ENCODE measurements at regions of chr1 and their contacts with region 1.

Region 1: DNA sequence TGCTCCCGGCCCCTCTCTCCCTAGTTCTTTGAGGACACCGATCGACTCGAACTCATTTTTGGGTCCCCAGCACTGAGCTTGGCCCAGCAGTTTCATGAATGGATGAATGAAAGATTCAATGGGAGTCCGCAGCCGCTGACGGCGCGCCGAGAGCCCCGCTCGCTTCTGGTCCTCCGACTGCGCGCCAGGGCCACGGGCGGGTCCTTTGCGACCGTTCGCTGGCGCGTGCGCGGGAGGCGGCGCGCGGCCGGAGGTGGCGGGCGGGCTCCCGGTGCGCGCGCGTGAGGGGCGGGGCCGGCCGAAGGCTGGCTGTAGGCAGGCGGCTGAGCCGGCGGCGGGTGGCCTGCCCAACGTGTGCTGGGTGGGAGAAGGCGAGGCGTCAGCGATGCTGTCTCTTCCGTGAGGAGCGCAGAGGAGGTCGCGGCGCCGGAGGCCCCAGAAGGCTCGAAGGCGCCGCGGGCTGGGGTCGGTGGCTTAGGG is at the start of gene MAST2:
- DNase-seq: peak; percentile 85 to 89
- ATAC-seq: peak; percentile 95 to 98 (median 96)
- H3K4me3 ChIP-seq: peak within 1 kb of the TSS; percentile 28
- H3K4me3 Mint-ChIP-seq: peak within 1 kb of the TSS; percentile 92
- H3K27ac ChIP-seq: peak within 1 kb of the TSS; percentile 1
- H3K27ac Mint-ChIP-seq: peak within 1 kb of the TSS; percentile 79 to 88
- H3K4me1 ChIP-seq: peaks cover 17% of the 10 kb centered on the region
- H3K4me1 Mint-ChIP-seq: peaks cover 16 to 31% of the 10 kb centered on the region in 2 donors
- H3K27me3 ChIP-seq: no peaks in the 10 kb centered on the region
- H3K27me3 Mint-ChIP-seq: no peaks in the 10 kb centered on the region
- CTCF ChIP-seq: no peak
- total RNA-seq, gene MAST2: 25.3 to 28.6 (median 27.9) TPM

Region 2: GRCh38 chr1:45750298-45751038 is 52.9 kb before region 1 on chr1 and contains the start of gene IPP:
- intact Hi-C with region 1: loop called (anchors 1 kb)
- DNase-seq: peak; percentile 89 to 96
- ATAC-seq: peak; percentile 93 to 98 (median 95)
- H3K4me3 ChIP-seq: peak within 1 kb of the TSS; percentile 91
- H3K4me3 Mint-ChIP-seq: peak within 1 kb of the TSS; percentile 98
- H3K27ac ChIP-seq: peak within 1 kb of the TSS; percentile 99
- H3K27ac Mint-ChIP-seq: peak within 1 kb of the TSS; percentile 99
- H3K4me1 ChIP-seq: peaks cover 18% of the 10 kb centered on the region
- H3K4me1 Mint-ChIP-seq: peaks cover 14 to 19% of the 10 kb centered on the region in 2 donors
- H3K27me3 ChIP-seq: no peaks in the 10 kb centered on the region
- H3K27me3 Mint-ChIP-seq: no peaks in the 10 kb centered on the region
- CTCF ChIP-seq: peak; percentile 27
- total RNA-seq, gene IPP: 15.3 to 20.8 (median 19.1) TPM